CD4-positive, alpha-beta T cell (primary cell): ENCODE measurements at regions of chr14 and their contacts with region 1.

Region 1: DNA sequence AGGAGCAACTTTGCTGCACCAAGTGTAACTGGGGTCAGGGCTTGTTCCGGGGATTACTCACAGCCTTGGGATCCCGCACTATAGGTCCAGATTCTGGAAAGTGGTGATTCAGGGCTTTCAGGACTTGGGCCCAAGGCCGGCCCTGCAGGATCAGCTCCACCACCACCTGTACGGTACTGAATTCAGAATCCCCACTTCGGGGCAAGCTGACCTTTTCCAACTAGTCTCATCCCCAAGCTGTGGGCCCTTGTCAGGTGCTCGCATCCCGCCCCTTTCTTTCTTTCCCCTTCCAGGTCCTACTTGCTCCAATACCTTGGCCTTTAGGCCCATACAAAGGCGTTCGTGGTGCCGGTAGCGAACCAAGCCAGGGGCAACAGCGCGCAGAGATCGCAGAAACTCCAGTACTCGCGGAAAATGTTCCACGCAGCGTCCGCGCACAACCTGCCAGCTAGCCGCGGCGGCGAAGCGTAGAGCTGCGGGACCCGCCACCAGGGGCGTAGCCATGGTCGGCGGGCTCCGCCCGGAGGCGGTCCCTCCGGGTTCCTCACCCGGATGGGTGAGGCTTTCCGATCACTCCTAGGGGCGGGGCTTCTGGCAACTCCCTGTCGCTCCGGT is 487 bp downstream of the TINF2 start:
- DNase-seq: peak; percentile 85 to 97 (median 92)
- ATAC-seq: peak; percentile 80
- H3K4me3 ChIP-seq: peak overlapping the region; percentile 93
- H3K4me3 Mint-ChIP-seq: peak overlapping the region; percentile 99
- H3K27ac ChIP-seq: peak overlapping the region; percentile 97 to 100
- H3K27ac Mint-ChIP-seq: peak overlapping the region; percentile 100
- H3K4me1 ChIP-seq: peaks cover 63% of the 10 kb centered on the region
- H3K4me1 Mint-ChIP-seq: peaks cover 69% of the 10 kb centered on the region
- H3K27me3 ChIP-seq: no peaks in the 10 kb centered on the region
- H3K27me3 Mint-ChIP-seq: no peaks in the 10 kb centered on the region
- CTCF ChIP-seq: no peak

Region 2: DNA sequence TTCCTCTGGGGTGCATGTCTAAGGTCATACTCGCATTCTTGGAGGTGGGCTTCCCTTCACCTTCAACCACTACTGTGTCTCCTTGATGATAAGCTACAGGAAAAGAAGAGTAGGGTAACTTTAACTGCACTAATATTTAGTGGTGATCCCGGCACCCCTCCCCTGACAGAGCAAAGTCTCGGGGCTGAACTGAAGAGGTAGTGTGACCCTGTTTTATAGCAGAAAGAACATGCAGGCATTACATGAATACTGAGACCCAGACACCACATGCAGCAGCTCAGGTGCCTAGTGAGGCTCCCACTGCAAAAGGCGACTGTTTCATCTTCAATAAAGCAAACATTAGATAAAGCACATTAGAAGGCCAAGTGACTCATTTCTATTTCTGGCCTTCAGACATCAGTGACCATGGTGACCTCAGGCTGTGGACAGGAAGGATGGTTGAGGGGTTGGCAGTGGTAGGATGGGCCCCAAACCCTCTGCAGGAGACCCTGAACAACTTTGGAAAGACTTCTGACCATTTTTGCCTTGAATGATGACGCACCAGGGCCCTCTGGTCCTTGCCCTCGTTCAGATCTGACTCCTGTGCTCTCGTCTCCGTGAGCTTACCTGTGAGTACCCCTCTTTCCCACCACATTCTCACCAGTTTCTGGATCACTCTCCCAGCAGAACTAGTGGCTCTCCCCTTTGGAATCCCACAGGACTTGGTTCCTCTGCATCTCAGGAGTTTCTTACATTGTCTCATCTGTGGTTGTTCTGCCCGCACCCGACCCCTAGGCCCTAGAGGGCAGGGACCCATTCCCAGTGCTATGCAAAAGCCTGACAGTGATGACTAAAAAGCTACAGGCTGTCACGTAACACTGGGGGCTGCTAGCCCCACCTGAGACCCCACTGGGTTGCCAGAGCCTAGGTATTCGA is 639.5 kb before region 1 on chr14:
- CTCF ChIA-PET with region 1: no interaction called
- POLR2A ChIA-PET with region 1: no interaction called
- intact Hi-C with region 1: no loop called
- DNase-seq: no peak
- ATAC-seq: no peak
- H3K4me3 ChIP-seq: no peak overlapping the region
- H3K4me3 Mint-ChIP-seq: no peak overlapping the region
- H3K27ac ChIP-seq: no peak overlapping the region
- H3K27ac Mint-ChIP-seq: no peak overlapping the region
- H3K4me1 ChIP-seq: no peaks in the 10 kb centered on the region
- H3K4me1 Mint-ChIP-seq: peaks cover 5% of the 10 kb centered on the region
- H3K27me3 ChIP-seq: no peaks in the 10 kb centered on the region
- H3K27me3 Mint-ChIP-seq: no peaks in the 10 kb centered on the region
- CTCF ChIP-seq: no peak

Region 3: GRCh38 chr14:24080888-24081738 is 160.8 kb before region 1 on chr14:
- CTCF ChIA-PET with region 1: no interaction called
- POLR2A ChIA-PET with region 1: interaction called, 19 read pairs
- intact Hi-C with region 1: no loop called
- DNase-seq: peak; percentile 47 to 82 (median 68)
- ATAC-seq: peak; percentile 90
- H3K4me3 ChIP-seq: peak overlapping the region; percentile 56
- H3K4me3 Mint-ChIP-seq: peak overlapping the region; percentile 93
- H3K27ac ChIP-seq: peak overlapping the region; percentile 2 to 52
- H3K27ac Mint-ChIP-seq: peak overlapping the region; percentile 90
- H3K4me1 ChIP-seq: peaks cover 21% of the 10 kb centered on the region
- H3K4me1 Mint-ChIP-seq: peaks cover 24% of the 10 kb centered on the region
- H3K27me3 ChIP-seq: no peaks in the 10 kb centered on the region
- H3K27me3 Mint-ChIP-seq: no peaks in the 10 kb centered on the region
- CTCF ChIP-seq: no peak

Region 4: GRCh38 chr14:24135834-24136542 is 105.9 kb before region 1 on chr14 and contains the start of gene PSME1:
- CTCF ChIA-PET with region 1: interaction called, 4 read pairs
- POLR2A ChIA-PET with region 1: interaction called, 16 read pairs
- intact Hi-C with region 1: no loop called
- DNase-seq: peak; percentile 89 to 97 (median 95)
- ATAC-seq: peak; percentile 97
- H3K4me3 ChIP-seq: peak within 1 kb of the TSS; percentile 74
- H3K4me3 Mint-ChIP-seq: peak within 1 kb of the TSS; percentile 94
- H3K27ac ChIP-seq: peak within 1 kb of the TSS; percentile 72 to 88
- H3K27ac Mint-ChIP-seq: peak within 1 kb of the TSS; percentile 85
- H3K4me1 ChIP-seq: peaks cover 68% of the 10 kb centered on the region
- H3K4me1 Mint-ChIP-seq: peaks cover 70% of the 10 kb centered on the region
- H3K27me3 ChIP-seq: no peaks in the 10 kb centered on the region
- H3K27me3 Mint-ChIP-seq: no peaks in the 10 kb centered on the region
- CTCF ChIP-seq: no peak
- total RNA-seq, gene PSME1: 166 to 171 TPM

Region 5: GRCh38 chr14:24171422-24172260 is 70.3 kb before region 1 on chr14 and contains the start of gene REC8:
- CTCF ChIA-PET with region 1: no interaction called
- POLR2A ChIA-PET with region 1: interaction called, 13 read pairs
- intact Hi-C with region 1: no loop called
- DNase-seq: peak; percentile 54 to 85 (median 70)
- ATAC-seq: peak; percentile 83
- H3K4me3 ChIP-seq: peak within 1 kb of the TSS; percentile 56
- H3K4me3 Mint-ChIP-seq: peak within 1 kb of the TSS; percentile 89
- H3K27ac ChIP-seq: peak within 1 kb of the TSS; percentile 29 to 44
- H3K27ac Mint-ChIP-seq: peak within 1 kb of the TSS; percentile 79
- H3K4me1 ChIP-seq: peaks cover 21% of the 10 kb centered on the region
- H3K4me1 Mint-ChIP-seq: peaks cover 42% of the 10 kb centered on the region
- H3K27me3 ChIP-seq: no peaks in the 10 kb centered on the region
- H3K27me3 Mint-ChIP-seq: no peaks in the 10 kb centered on the region
- CTCF ChIP-seq: no peak
- total RNA-seq, gene REC8: 105 to 107 TPM

Region 6: GRCh38 chr14:24204163-24205146 is 37.5 kb before region 1 on chr14:
- CTCF ChIA-PET with region 1: no interaction called
- POLR2A ChIA-PET with region 1: no interaction called
- intact Hi-C with region 1: no loop called
- DNase-seq: no peak
- ATAC-seq: no peak
- H3K4me3 ChIP-seq: no peak overlapping the region
- H3K4me3 Mint-ChIP-seq: no peak overlapping the region
- H3K27ac ChIP-seq: no peak overlapping the region
- H3K27ac Mint-ChIP-seq: peak overlapping the region; percentile 1
- H3K4me1 ChIP-seq: peaks cover 8% of the 10 kb centered on the region
- H3K4me1 Mint-ChIP-seq: peaks cover 22% of the 10 kb centered on the region
- H3K27me3 ChIP-seq: no peaks in the 10 kb centered on the region
- H3K27me3 Mint-ChIP-seq: no peaks in the 10 kb centered on the region
- CTCF ChIP-seq: no peak

Region 7: DNA sequence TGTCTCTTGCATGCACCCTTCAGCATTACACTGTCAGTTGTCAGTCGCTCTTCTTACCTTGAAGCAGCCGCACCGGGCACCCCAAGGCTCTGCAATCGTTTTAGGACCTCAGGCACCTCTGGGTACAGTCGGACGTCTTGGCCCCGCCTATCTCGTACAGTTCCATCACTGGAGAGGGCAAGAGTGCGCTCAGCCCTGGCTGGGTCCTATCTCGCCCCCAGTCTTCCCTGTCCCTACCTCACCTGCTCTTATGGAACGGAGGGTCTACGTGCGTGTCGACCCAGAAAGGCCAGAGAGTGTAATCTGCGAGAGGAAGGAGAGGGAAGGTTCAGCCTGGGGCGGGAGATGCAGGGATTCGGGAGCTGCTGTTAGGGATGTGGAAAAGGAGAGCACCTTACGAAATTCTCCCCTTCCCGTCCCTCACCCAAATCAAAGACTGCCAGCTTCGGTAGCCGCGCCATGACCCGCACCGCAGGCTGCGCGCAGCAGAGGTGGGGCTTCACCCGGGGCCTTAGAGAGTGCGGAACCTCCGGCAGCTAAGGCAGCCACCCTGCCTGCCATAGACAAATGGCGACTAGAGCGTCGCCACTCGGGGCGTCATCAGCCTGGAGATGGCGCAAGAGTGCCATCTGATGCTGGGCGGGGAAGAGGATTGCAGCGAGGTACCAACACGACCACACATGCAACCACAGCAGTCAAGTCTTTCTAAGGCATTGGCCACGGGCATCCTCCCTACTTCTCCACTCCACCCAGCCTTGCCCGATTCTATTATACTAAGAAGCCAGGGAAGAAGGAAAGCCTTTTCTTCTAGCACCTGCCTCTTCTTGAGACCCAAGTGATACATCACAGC is 26.2 kb before region 1 on chr14 and contains the start of gene MDP1:
- CTCF ChIA-PET with region 1: interaction called, 38 read pairs
- POLR2A ChIA-PET with region 1: interaction called, 144 read pairs
- intact Hi-C with region 1: loop called (anchors 1 to 2 kb)
- DNase-seq: peak; percentile 79 to 97 (median 86)
- ATAC-seq: peak; percentile 72
- H3K4me3 ChIP-seq: peak within 1 kb of the TSS; percentile 84
- H3K4me3 Mint-ChIP-seq: peak within 1 kb of the TSS; percentile 97
- H3K27ac ChIP-seq: peak within 1 kb of the TSS; percentile 92
- H3K27ac Mint-ChIP-seq: peak within 1 kb of the TSS; percentile 96
- H3K4me1 ChIP-seq: peaks cover 44% of the 10 kb centered on the region
- H3K4me1 Mint-ChIP-seq: peaks cover 49% of the 10 kb centered on the region
- H3K27me3 ChIP-seq: no peaks in the 10 kb centered on the region
- H3K27me3 Mint-ChIP-seq: no peaks in the 10 kb centered on the region
- CTCF ChIP-seq: peak; percentile 67
- total RNA-seq, gene MDP1: 3.2 to 3.7 TPM

Region 8: DNA sequence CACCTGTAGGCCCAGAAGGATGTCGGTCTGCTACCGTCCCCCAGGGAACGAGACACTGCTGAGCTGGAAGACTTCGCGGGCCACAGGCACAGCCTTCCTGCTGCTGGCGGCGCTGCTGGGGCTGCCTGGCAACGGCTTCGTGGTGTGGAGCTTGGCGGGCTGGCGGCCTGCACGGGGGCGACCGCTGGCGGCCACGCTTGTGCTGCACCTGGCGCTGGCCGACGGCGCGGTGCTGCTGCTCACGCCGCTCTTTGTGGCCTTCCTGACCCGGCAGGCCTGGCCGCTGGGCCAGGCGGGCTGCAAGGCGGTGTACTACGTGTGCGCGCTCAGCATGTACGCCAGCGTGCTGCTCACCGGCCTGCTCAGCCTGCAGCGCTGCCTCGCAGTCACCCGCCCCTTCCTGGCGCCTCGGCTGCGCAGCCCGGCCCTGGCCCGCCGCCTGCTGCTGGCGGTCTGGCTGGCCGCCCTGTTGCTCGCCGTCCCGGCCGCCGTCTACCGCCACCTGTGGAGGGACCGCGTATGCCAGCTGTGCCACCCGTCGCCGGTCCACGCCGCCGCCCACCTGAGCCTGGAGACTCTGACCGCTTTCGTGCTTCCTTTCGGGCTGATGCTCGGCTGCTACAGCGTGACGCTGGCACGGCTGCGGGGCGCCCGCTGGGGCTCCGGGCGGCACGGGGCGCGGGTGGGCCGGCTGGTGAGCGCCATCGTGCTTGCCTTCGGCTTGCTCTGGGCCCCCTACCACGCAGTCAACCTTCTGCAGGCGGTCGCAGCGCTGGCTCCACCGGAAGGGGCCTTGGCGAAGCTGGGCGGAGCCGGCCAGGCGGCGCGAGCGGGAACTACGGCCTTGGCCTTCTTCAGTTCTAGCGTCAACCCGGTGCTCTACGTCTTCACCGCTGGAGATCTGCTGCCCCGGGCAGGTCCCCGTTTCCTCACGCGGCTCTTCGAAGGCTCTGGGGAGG is 69.0 kb after region 1 on chr14 and contains the start of gene LTB4R:
- CTCF ChIA-PET with region 1: interaction called, 32 read pairs
- POLR2A ChIA-PET with region 1: interaction called, 52 read pairs
- intact Hi-C with region 1: no loop called
- DNase-seq: peak; percentile 47 to 91 (median 61)
- ATAC-seq: peak; percentile 81
- H3K4me3 ChIP-seq: peak within 1 kb of the TSS; percentile 65
- H3K4me3 Mint-ChIP-seq: peak within 1 kb of the TSS; percentile 88
- H3K27ac ChIP-seq: peak within 1 kb of the TSS; percentile 59 to 73
- H3K27ac Mint-ChIP-seq: peak within 1 kb of the TSS; percentile 76
- H3K4me1 ChIP-seq: peaks cover 80% of the 10 kb centered on the region
- H3K4me1 Mint-ChIP-seq: peaks cover 80% of the 10 kb centered on the region
- H3K27me3 ChIP-seq: no peaks in the 10 kb centered on the region
- H3K27me3 Mint-ChIP-seq: no peaks in the 10 kb centered on the region
- CTCF ChIP-seq: peak; percentile 45
- total RNA-seq, gene LTB4R: 15.6 to 18.3 TPM

Region 9: DNA sequence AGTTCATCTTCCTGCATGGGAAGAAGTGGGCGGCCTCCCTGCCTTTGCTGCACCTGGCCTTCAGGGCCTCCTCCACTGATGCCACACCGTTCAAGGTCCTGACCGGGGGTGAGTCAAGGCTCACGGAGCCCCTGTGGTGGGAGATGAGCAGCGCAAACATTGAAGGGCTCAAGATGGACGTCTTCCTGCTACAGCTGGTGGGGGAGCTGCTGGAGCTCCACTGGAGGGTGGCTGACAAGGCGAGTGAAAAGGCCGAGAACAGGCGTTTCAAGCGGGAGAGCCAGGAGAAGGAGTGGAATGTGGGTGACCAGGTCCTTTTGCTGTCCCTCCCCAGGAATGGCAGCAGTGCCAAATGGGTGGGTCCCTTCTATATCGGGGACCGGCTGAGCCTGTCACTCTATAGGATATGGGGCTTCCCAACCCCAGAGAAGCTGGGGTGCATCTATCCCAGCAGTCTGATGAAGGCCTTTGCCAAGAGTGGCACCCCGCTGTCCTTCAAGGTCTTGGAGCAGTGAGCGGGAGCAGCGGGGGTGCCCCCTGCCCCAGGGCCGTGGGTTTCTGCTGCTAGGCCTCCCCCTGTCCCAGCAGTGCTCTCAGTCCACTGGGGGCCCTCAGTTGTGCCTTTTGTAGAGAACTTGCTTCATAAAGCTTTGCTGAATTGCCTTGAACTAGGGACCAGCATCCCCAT is 175.1 kb after region 1 on chr14:
- CTCF ChIA-PET with region 1: no interaction called
- POLR2A ChIA-PET with region 1: no interaction called
- intact Hi-C with region 1: no loop called
- DNase-seq: no peak
- ATAC-seq: no peak
- H3K4me3 ChIP-seq: no peak overlapping the region
- H3K4me3 Mint-ChIP-seq: no peak overlapping the region
- H3K27ac ChIP-seq: no peak overlapping the region
- H3K27ac Mint-ChIP-seq: no peak overlapping the region
- H3K4me1 ChIP-seq: peaks cover under 1% of the 10 kb centered on the region
- H3K4me1 Mint-ChIP-seq: no peaks in the 10 kb centered on the region
- H3K27me3 ChIP-seq: no peaks in the 10 kb centered on the region
- H3K27me3 Mint-ChIP-seq: peaks cover 5% of the 10 kb centered on the region
- CTCF ChIP-seq: no peak

Region 10: DNA sequence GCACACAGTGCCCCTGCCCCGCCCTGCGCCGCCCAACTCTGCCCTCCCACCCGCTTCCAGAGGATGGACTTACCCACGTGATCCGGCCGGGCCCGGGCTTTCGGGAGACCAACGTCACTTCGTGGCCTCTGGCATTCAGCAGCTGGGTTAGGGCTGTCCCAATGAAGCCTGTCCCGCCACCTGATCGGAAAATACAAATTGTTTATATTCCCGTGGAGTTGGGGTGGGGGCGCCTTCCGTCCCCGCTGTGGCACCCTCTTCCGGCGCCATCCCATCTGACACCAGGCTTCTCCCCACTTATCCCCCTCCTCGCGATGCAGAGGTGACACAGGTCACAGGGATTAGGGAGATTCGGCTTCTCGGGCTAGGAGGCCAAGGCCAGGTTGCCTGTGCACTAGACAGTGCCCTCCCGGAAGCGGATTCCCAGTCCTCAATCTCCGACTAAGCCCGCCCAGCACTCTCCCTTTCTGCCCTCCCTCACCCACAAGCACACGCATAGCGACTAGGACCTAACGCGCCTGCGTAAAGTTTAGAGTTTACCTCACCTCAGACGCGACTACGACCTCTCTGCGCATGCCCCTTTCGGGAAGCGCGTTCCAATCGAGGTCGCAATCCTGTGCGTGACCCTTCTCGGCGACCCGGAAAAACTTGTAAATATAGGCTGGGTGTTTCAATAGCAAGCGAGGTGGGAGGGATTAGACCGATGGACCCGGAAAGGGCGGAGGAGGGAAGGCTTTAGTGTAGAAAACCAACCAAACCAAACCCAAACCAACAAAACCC is 200.5 kb after region 1 on chr14 and contains the start of gene SDR39U1:
- CTCF ChIA-PET with region 1: interaction called, 16 read pairs
- POLR2A ChIA-PET with region 1: interaction called, 15 read pairs
- intact Hi-C with region 1: no loop called
- DNase-seq: peak; percentile 90 to 100 (median 96)
- ATAC-seq: peak; percentile 86
- H3K4me3 ChIP-seq: peak within 1 kb of the TSS; percentile 88
- H3K4me3 Mint-ChIP-seq: peak within 1 kb of the TSS; percentile 88
- H3K27ac ChIP-seq: peak within 1 kb of the TSS; percentile 93 to 99
- H3K27ac Mint-ChIP-seq: peak within 1 kb of the TSS; percentile 90
- H3K4me1 ChIP-seq: peaks cover 32% of the 10 kb centered on the region
- H3K4me1 Mint-ChIP-seq: peaks cover 53% of the 10 kb centered on the region
- H3K27me3 ChIP-seq: no peaks in the 10 kb centered on the region
- H3K27me3 Mint-ChIP-seq: no peaks in the 10 kb centered on the region
- CTCF ChIP-seq: no peak
- total RNA-seq, gene SDR39U1: 71.7 to 74.7 TPM

Region 11: GRCh38 chr14:24542346-24542936 is 300.5 kb after region 1 on chr14:
- CTCF ChIA-PET with region 1: no interaction called
- POLR2A ChIA-PET with region 1: no interaction called
- intact Hi-C with region 1: no loop called
- DNase-seq: no peak
- ATAC-seq: no peak
- H3K4me3 ChIP-seq: no peak overlapping the region
- H3K4me3 Mint-ChIP-seq: no peak overlapping the region
- H3K27ac ChIP-seq: no peak overlapping the region
- H3K27ac Mint-ChIP-seq: no peak overlapping the region
- H3K4me1 ChIP-seq: no peaks in the 10 kb centered on the region
- H3K4me1 Mint-ChIP-seq: no peaks in the 10 kb centered on the region
- H3K27me3 ChIP-seq: peaks cover 7% of the 10 kb centered on the region in 2 experiments
- H3K27me3 Mint-ChIP-seq: peaks cover 12% of the 10 kb centered on the region
- CTCF ChIP-seq: no peak